Panc1 (cell line): ENCODE measurements at regions of chr4 and their contacts with region 1.

Region 1: DNA sequence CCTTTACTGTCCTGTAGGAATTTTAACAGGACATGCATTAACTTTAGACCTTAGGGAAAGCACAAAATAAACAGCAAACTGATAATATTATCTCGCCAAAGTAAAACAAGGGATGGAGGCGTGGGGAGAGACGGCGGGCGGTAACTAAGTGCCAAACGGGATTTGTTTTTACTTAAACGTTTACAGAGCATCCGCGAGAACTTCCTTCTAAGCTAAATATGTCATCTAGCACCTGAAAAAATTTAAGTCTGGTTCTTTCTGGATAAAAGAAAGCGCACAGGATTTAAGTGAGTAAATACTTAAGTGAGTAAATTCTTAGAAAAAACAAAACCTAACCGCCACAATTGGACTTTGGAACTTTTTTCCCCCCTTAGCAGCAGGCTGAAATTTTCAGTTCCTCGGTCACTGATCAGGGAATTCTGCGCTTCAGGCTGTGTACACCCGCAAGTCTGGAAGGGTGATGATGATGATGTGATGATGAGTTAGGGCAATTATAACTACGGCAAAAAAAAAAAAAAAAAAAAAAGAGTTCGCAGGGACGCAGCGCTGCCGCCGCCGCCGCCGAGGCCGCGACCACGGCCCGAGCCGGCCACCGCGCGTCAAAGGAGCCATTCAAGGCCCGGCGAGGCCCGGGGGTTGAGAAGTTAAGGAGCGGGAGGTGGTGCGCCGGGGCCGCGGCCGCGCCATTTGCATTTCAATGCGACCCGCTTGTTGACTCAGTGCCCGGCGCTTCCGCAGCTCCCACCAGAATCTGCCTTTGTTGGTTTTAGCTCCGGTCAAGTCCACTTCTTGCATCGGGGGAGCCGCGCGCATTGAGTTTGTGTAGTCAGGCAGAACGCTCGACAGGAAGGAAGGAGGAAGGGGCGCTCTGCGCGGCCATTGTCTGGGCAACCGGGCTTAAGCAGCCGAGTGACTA is 108.8 kb downstream of the SPRY1 start:
- DNase-seq: no peak
- ATAC-seq: peak; percentile 66
- H3K4me3 ChIP-seq: peak overlapping the region; percentile 37 to 54
- H3K27ac ChIP-seq: peak overlapping the region; percentile 96
- H3K4me1 ChIP-seq: peaks cover 38% of the 10 kb centered on the region
- H3K27me3 ChIP-seq: no peaks in the 10 kb centered on the region
- CTCF ChIP-seq: no peak

Region 2: GRCh38 chr4:123408471-123409084 is 96.8 kb before region 1 on chr4:
- CTCF ChIA-PET with region 1: no interaction called
- POLR2A ChIA-PET with region 1: interaction called, 5 read pairs
- in situ Hi-C with region 1: no loop called
- intact Hi-C with region 1: loop called (anchors 2 kb)
- DNase-seq: no peak
- ATAC-seq: peak; percentile 66
- H3K4me3 ChIP-seq: peak overlapping the region in 1 of 2 experiments; percentile 8; a peak in 2 of 4 replicates
- H3K27ac ChIP-seq: peak overlapping the region; percentile 94
- H3K4me1 ChIP-seq: peaks cover 83% of the 10 kb centered on the region
- H3K27me3 ChIP-seq: no peaks in the 10 kb centered on the region
- CTCF ChIP-seq: no peak

Region 3: GRCh38 chr4:123461996-123462395 is 43.4 kb before region 1 on chr4:
- CTCF ChIA-PET with region 1: no interaction called
- POLR2A ChIA-PET with region 1: no interaction called
- in situ Hi-C with region 1: no loop called
- intact Hi-C with region 1: no loop called
- DNase-seq: no peak
- ATAC-seq: no peak
- H3K4me3 ChIP-seq: no peak overlapping the region
- H3K27ac ChIP-seq: peak overlapping the region; percentile 31; the same call in 1 of the 2 replicates
- H3K4me1 ChIP-seq: no peaks in the 10 kb centered on the region
- H3K27me3 ChIP-seq: no peaks in the 10 kb centered on the region
- CTCF ChIP-seq: no peak

Region 4: DNA sequence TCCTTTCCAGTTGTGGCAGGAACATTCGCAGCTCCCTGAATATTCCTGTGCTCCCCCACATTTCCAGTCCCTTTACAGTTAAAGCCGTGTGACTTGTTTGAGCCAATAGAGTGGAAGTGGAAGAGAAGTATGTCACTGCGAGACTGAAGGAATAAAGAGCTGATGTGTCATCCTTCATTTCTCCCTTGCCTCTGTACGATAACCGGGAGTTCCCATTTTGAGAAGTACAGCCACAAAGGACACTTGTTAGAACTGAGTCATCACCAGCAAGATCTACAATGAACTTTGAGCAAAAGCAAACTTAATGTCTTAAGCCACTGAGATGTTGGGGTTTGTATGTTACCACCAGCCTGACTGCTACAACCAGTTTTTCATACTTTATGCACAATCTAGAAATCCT is 16.4 kb before region 1 on chr4:
- CTCF ChIA-PET with region 1: no interaction called
- POLR2A ChIA-PET with region 1: interaction called, 10 read pairs
- in situ Hi-C with region 1: no loop called
- intact Hi-C with region 1: no loop called
- DNase-seq: no peak
- ATAC-seq: peak; percentile 81
- H3K4me3 ChIP-seq: no peak overlapping the region
- H3K27ac ChIP-seq: peak overlapping the region; percentile 78
- H3K4me1 ChIP-seq: peaks cover 4% of the 10 kb centered on the region; the same call in 1 of the 2 replicates
- H3K27me3 ChIP-seq: no peaks in the 10 kb centered on the region
- CTCF ChIP-seq: no peak

Region 5: DNA sequence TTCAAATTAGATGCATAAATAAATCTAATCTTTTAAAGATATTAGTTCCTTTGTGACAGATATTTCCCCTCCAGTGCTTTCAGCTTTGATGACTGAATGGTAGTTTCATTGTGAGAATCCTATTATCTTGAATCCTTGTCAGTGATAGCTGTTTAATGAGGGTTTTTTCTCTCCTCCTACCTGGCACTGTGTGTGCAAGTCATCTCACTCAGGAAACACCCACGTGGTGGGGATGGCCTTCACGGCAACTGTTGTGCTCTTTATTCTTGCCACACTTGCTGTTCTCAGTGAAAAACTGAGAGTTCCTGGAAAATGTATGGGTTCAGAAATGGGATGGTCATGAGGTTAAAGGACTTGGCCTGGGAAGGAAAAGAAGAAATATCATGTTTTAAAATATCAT is 21.2 kb after region 1 on chr4:
- CTCF ChIA-PET with region 1: no interaction called
- POLR2A ChIA-PET with region 1: interaction called, 15 read pairs
- in situ Hi-C with region 1: no loop called
- intact Hi-C with region 1: no loop called
- DNase-seq: no peak
- ATAC-seq: no peak
- H3K4me3 ChIP-seq: no peak overlapping the region
- H3K27ac ChIP-seq: peak overlapping the region; percentile 71; the same call in 1 of the 2 replicates
- H3K4me1 ChIP-seq: no peaks in the 10 kb centered on the region
- H3K27me3 ChIP-seq: no peaks in the 10 kb centered on the region
- CTCF ChIP-seq: no peak

Region 6: DNA sequence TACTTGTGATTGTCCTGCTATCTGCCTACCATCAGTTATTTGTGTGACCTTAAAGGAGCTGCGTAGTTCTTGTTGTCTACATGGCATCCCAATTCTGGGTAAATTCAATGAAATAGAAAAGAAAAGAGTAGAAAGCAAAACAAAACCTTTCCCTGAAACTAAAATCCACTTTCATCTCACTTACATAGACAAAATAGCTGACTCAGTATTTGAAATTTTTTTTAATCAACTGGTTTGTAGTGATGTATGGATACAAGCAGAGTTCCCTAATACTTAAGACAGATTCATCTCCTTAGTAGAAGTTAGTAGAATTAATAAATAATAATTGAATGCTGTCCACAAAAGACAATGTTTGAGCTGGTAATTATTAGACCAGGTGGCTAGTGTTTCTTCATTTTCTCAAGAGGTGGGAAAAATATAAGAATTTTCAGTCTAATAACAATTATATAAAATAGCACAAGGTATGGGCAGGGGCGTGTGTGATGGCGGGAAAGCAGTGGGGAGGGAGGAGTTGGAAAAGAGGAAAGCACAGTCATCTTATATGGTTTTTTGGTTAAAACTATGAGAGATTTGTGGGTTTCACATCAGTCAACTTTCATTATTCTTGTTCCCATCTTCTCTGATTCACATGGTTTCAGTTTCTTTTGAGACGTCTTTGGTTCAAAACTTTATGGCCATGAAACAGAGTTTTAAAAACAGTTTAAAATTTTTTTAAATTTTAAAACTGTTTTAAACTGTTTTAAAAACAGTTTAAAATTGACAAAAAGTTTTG is 166.5 kb after region 1 on chr4:
- CTCF ChIA-PET with region 1: no interaction called
- POLR2A ChIA-PET with region 1: no interaction called
- in situ Hi-C with region 1: no loop called
- intact Hi-C with region 1: no loop called
- DNase-seq: no peak
- ATAC-seq: no peak
- H3K4me3 ChIP-seq: no peak overlapping the region
- H3K27ac ChIP-seq: peak overlapping the region; percentile 2; the same call in 1 of the 2 replicates
- H3K4me1 ChIP-seq: peaks cover 7% of the 10 kb centered on the region
- H3K27me3 ChIP-seq: no peaks in the 10 kb centered on the region
- CTCF ChIP-seq: no peak